ENCODE measurements at regions of chr16 and their contacts with region 1.

Region 1: GRCh38 chr16:4475880-4476788 is at the start of gene HMOX2:
- DNase-seq: peak; percentile 89 to 98 (median 96)

Region 2: DNA sequence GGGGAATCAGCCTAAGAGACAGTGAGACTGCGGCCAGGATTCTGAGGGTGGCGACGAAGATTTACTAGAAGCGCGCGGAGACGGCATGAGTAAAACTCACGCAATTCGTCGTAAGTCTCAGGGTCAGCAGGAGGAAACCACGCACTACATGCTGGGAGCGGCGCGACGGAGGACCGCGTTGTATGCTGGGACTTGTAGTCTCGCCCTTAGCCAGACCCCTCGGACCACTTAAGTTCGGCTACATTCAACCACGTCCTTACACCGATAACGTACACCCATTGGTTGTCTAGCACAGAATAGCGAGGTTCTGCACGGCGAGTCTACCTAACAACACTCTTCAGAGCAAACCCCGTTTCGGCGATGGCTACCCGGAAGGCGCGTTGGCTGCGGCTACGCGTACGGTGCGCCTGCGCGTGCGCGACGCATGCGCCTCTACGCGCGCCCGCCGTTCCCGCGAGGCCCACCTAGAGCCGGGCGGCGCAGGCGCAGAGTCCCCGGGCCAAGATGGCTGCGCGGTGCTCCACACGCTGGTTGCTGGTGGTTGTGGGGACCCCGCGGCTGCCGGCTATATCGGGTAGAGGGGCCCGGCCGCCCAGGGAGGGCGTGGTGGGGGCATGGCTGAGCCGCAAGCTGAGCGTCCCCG is 50.6 kb before region 1 on chr16 and contains the start of gene DNAJA3:
- intact Hi-C with region 1: loop called (anchors 10 kb)
- DNase-seq: peak; percentile 88 to 97 (median 93)

Region 3: DNA sequence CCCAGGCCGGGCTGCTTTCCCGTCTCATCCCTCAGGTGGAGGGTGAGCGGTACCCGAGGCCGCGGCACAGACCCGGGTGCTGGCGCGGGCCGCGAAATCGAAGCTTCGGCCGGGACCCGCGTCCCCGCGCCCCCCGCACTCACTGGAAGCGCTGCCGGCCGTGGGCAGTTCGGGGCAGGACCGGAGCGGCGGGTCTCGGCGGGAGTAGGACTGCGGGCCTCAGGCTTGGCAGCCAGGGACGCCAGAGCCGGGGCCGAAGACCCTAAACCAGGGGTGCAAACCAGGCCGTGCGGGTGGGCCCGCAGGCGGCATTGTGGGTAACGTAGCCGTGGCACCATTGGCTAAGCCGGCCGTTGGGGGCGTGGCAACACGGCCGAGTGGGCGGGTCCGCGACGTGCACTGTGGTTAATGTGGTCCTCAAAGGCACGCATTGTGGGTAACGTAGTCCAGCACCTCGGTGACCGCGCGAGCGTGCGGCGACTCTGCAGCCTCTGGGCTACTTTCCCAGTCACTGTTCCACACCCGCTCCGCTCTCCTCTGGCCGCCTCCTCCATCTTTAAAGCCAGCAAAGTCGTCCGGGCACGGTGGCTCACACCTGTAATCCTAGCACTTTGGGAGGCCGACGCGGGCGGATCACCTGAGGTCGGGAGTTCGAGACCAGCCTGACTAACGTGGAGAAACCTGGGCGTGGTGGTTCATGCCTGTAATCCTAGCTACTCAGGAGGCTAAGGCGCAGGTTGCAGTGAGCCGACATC is 290.9 kb after region 1 on chr16 and contains the start of gene ZNF500:
- intact Hi-C with region 1: no loop called
- DNase-seq: peak; percentile 97 to 100 (median 99)